Calu3 (cell line): ENCODE measurements at regions of chr4 and their contacts with region 1.

Region 1: GRCh38 chr4:156677131-156677531 is 294.5 kb downstream of the PDGFC start:
- DNase-seq: peak; percentile 42
- H3K4me3 Mint-ChIP-seq: no peak overlapping the region
- H3K27ac Mint-ChIP-seq: peak overlapping the region; percentile 39
- H3K4me1 Mint-ChIP-seq: peaks cover 11% of the 10 kb centered on the region
- H3K27me3 Mint-ChIP-seq: no peaks in the 10 kb centered on the region
- CTCF ChIP-seq: peak; percentile 37

Region 2: GRCh38 chr4:156169011-156169410 is 508.1 kb before region 1 on chr4:
- CTCF ChIA-PET with region 1: no interaction called
- intact Hi-C with region 1: loop called (anchors 5 kb)
- DNase-seq: peak; percentile 14
- H3K4me3 Mint-ChIP-seq: no peak overlapping the region
- H3K27ac Mint-ChIP-seq: no peak overlapping the region
- H3K4me1 Mint-ChIP-seq: peaks cover 13% of the 10 kb centered on the region
- H3K27me3 Mint-ChIP-seq: no peaks in the 10 kb centered on the region
- CTCF ChIP-seq: no peak

Region 3: GRCh38 chr4:156294577-156294976 is 382.6 kb before region 1 on chr4:
- CTCF ChIA-PET with region 1: no interaction called
- intact Hi-C with region 1: loop called (anchors 10 kb)
- DNase-seq: peak; percentile 43
- H3K4me3 Mint-ChIP-seq: no peak overlapping the region
- H3K27ac Mint-ChIP-seq: peak overlapping the region; percentile 75
- H3K4me1 Mint-ChIP-seq: peaks cover 24% of the 10 kb centered on the region
- H3K27me3 Mint-ChIP-seq: no peaks in the 10 kb centered on the region
- CTCF ChIP-seq: no peak

Region 4: DNA sequence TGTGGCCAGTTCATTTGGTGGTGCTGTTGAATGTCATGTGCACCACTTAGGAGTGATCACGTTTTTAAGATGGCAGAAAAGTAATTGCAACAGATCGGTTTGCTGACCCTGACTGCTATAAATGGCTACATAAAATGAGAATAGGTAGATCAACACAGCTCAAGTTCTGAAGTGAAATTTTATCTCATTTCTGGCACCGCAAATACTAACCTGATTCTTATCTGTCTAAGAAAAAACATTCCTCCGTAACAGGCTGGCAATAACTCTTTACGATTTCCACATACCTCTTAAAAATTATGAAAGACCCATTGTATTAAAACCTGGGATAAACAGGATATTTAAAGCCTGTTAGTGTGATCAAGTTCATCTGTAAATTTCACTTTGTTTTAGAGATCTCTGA is 93.0 kb before region 1 on chr4:
- CTCF ChIA-PET with region 1: no interaction called
- intact Hi-C with region 1: loop called (anchors 5 kb)
- DNase-seq: no peak
- H3K4me3 Mint-ChIP-seq: no peak overlapping the region
- H3K27ac Mint-ChIP-seq: peak overlapping the region; percentile 74
- H3K4me1 Mint-ChIP-seq: peaks cover 11% of the 10 kb centered on the region
- H3K27me3 Mint-ChIP-seq: no peaks in the 10 kb centered on the region
- CTCF ChIP-seq: no peak

Region 5: DNA sequence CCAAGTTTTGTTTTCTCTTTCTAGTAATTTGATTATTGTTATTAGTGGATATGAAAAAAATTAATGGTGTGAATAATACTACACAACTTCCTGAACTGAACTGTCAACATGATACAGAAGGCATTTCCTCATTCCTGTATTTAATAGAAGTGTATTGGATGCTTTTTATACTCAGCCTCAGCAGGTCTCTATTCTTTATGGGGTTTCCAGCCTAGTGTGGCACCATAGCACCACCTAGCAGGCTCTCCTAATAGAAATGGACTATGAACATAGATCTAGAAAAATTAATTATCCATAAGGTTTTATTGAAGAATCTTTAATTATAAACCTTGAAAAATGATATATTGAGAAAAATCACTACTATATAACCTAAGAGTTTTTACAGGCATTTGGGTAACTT is 451.3 kb after region 1 on chr4:
- CTCF ChIA-PET with region 1: no interaction called
- intact Hi-C with region 1: loop called (anchors 5 kb)
- DNase-seq: peak; percentile 31
- H3K4me3 Mint-ChIP-seq: no peak overlapping the region
- H3K27ac Mint-ChIP-seq: no peak overlapping the region
- H3K4me1 Mint-ChIP-seq: no peaks in the 10 kb centered on the region
- H3K27me3 Mint-ChIP-seq: no peaks in the 10 kb centered on the region
- CTCF ChIP-seq: no peak